ENCODE measurements at regions of chr9 and their contacts with region 1.

Region 1: GRCh38 chr9:124695280-124695890 is 75.7 kb downstream of the NR6A1 start:
- DNase-seq: no peak
- H3K4me3 ChIP-seq: no peak overlapping the region
- H3K27ac ChIP-seq: no peak overlapping the region
- H3K4me1 ChIP-seq: peaks cover 9 to 17% (median 14%) of the 10 kb centered on the region in 4 experiments; a peak in 6 of 7 replicates
- H3K27me3 ChIP-seq: no peaks in the 10 kb centered on the region
- CTCF ChIP-seq: no peak
- EP300 ChIP-seq: no peak
- POLR2A ChIP-seq: no peak
- RAD21 ChIP-seq: no peak

Region 2: GRCh38 chr9:124664143-124664542 is 31.2 kb before region 1 on chr9:
- CTCF ChIA-PET with region 1: no interaction called
- POLR2A ChIA-PET with region 1: no interaction called
- DNase-seq: no peak
- H3K4me3 ChIP-seq: no peak overlapping the region
- H3K27ac ChIP-seq: no peak overlapping the region
- H3K4me1 ChIP-seq: peaks cover 0 to 7% (median 4%) of the 10 kb centered on the region in 4 experiments; a peak in 5 of 7 replicates
- H3K27me3 ChIP-seq: no peaks in the 10 kb centered on the region
- CTCF ChIP-seq: no peak
- EP300 ChIP-seq: no peak
- POLR2A ChIP-seq: no peak
- RAD21 ChIP-seq: no peak

Region 3: GRCh38 chr9:124675261-124676158 is 19.9 kb before region 1 on chr9:
- CTCF ChIA-PET with region 1: interaction called, 12 read pairs
- POLR2A ChIA-PET with region 1: no interaction called
- DNase-seq: no peak
- H3K4me3 ChIP-seq: no peak overlapping the region
- H3K27ac ChIP-seq: no peak overlapping the region
- H3K4me1 ChIP-seq: no peaks in the 10 kb centered on the region
- H3K27me3 ChIP-seq: no peaks in the 10 kb centered on the region
- CTCF ChIP-seq: no peak
- EP300 ChIP-seq: no peak
- POLR2A ChIP-seq: no peak
- RAD21 ChIP-seq: no peak

Region 4: DNA sequence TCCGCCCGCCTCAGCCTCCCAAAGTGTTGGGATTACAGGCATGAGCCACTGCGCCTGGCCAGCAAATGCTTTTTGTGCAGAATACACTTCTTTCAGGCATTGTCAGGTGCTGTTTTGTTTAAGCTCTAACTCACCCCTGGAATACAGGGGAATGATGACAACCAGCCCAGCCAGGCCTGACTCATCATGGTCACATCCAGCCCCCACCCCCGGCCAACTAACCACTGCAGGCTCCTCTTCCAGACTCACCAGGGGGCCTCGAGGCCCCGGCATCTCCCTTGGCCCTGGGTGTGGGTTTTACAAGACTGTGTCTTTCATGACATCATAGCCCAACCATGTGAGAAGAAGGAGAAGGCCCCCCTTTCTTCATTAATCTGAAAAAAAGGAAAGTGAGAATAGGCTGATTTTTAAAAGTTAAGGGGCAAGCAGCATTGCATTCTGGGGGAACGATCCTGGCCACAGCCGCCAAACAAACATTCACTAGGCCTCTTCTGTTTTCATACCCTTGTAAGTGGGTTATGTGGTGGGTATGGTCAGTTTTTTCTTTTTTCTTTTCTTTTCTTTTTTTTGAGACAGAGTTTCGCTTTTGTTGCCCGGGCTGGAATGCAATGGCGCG is 117.1 kb after region 1 on chr9:
- CTCF ChIA-PET with region 1: no interaction called
- POLR2A ChIA-PET with region 1: no interaction called
- DNase-seq: peak in 1 of 2 experiments; percentile 64
- H3K4me3 ChIP-seq: no peak overlapping the region
- H3K27ac ChIP-seq: no peak overlapping the region
- H3K4me1 ChIP-seq: peaks cover 10 to 24% (median 16%) of the 10 kb centered on the region in 4 experiments
- H3K27me3 ChIP-seq: no peaks in the 10 kb centered on the region
- CTCF ChIP-seq: no peak
- EP300 ChIP-seq: no peak
- POLR2A ChIP-seq: no peak
- RAD21 ChIP-seq: no peak